ENCODE measurements at regions of chr13 and their contacts with region 1.

Region 1: DNA sequence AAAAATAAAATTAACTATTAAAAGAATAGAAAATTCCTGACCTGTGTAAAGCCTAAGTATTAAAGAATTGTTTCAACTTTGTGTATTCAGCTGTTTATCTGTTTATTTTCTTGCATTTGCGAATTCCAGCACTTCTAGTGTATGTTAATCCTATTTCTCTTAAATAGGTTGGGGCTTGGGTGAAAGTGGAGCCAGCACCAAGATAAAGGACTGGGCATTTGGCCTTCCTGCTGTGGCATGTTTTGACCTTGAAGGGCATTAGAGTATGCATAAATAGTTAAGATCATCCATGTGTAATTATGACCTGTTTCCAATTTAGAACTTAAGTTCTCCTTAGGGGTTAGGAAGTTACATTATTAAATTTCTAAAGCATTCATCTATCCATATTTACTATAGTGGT is 151.3 kb downstream of the NBEA start:
- DNase-seq: no peak
- ATAC-seq: no peak
- H3K4me3 ChIP-seq: no peak overlapping the region
- H3K4me3 Mint-ChIP-seq: no peak overlapping the region
- H3K27ac ChIP-seq: no peak overlapping the region
- H3K27ac Mint-ChIP-seq: no peak overlapping the region
- H3K4me1 ChIP-seq: no peaks in the 10 kb centered on the region
- H3K4me1 Mint-ChIP-seq: no peaks in the 10 kb centered on the region
- H3K27me3 ChIP-seq: no peaks in the 10 kb centered on the region
- H3K27me3 Mint-ChIP-seq: no peaks in the 10 kb centered on the region

Region 2: DNA sequence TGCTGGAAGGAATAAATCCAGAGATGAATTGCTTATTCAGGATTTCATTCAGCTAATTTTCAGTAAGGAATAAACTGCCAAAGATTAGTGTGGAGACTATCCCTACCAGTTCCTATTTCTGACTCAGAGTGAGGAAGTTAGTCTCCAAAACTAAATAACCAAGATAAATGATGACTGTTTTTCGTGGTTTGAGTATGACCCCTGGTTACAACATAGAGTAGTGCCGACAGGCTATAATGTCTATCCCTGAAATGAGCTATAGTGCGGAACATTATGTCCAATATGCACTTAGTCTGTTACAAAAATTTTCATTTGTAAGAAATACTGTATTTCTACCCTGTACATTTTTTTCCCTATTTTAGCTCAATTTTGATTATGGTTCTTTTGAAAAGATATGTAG is 99.9 kb before region 1 on chr13:
- CTCF ChIA-PET with region 1: no interaction called
- POLR2A ChIA-PET with region 1: no interaction called
- intact Hi-C with region 1: no loop called
- DNase-seq: no peak
- ATAC-seq: no peak
- H3K4me3 ChIP-seq: no peak overlapping the region
- H3K4me3 Mint-ChIP-seq: no peak overlapping the region
- H3K27ac ChIP-seq: no peak overlapping the region
- H3K27ac Mint-ChIP-seq: no peak overlapping the region
- H3K4me1 ChIP-seq: no peaks in the 10 kb centered on the region
- H3K4me1 Mint-ChIP-seq: peaks cover 0 to 4% (median 0%) of the 10 kb centered on the region in 7 donors
- H3K27me3 ChIP-seq: no peaks in the 10 kb centered on the region
- H3K27me3 Mint-ChIP-seq: no peaks in the 10 kb centered on the region

Region 3: GRCh38 chr13:35039012-35039411 is 54.3 kb before region 1 on chr13:
- CTCF ChIA-PET with region 1: no interaction called
- POLR2A ChIA-PET with region 1: no interaction called
- intact Hi-C with region 1: loop called in 1 of 2 experiments (anchors 10 kb)
- DNase-seq: no peak
- ATAC-seq: no peak
- H3K4me3 ChIP-seq: no peak overlapping the region
- H3K4me3 Mint-ChIP-seq: no peak overlapping the region
- H3K27ac ChIP-seq: no peak overlapping the region
- H3K27ac Mint-ChIP-seq: no peak overlapping the region
- H3K4me1 ChIP-seq: no peaks in the 10 kb centered on the region
- H3K4me1 Mint-ChIP-seq: peaks cover 0 to 1% (median 0%) of the 10 kb centered on the region in 7 donors
- H3K27me3 ChIP-seq: no peaks in the 10 kb centered on the region
- H3K27me3 Mint-ChIP-seq: no peaks in the 10 kb centered on the region

Region 4: GRCh38 chr13:35139591-35139990 is 46.2 kb after region 1 on chr13:
- CTCF ChIA-PET with region 1: no interaction called
- POLR2A ChIA-PET with region 1: no interaction called
- intact Hi-C with region 1: no loop called
- DNase-seq: no peak
- ATAC-seq: peak; percentile 50
- H3K4me3 ChIP-seq: no peak overlapping the region
- H3K4me3 Mint-ChIP-seq: peak overlapping the region in 1 of 10 donors; percentile 49
- H3K27ac ChIP-seq: no peak overlapping the region
- H3K27ac Mint-ChIP-seq: peak overlapping the region in 1 of 9 donors; percentile 68
- H3K4me1 ChIP-seq: no peaks in the 10 kb centered on the region
- H3K4me1 Mint-ChIP-seq: peaks cover 0 to 20% (median 2%) of the 10 kb centered on the region in 7 donors
- H3K27me3 ChIP-seq: no peaks in the 10 kb centered on the region
- H3K27me3 Mint-ChIP-seq: no peaks in the 10 kb centered on the region

Region 5: DNA sequence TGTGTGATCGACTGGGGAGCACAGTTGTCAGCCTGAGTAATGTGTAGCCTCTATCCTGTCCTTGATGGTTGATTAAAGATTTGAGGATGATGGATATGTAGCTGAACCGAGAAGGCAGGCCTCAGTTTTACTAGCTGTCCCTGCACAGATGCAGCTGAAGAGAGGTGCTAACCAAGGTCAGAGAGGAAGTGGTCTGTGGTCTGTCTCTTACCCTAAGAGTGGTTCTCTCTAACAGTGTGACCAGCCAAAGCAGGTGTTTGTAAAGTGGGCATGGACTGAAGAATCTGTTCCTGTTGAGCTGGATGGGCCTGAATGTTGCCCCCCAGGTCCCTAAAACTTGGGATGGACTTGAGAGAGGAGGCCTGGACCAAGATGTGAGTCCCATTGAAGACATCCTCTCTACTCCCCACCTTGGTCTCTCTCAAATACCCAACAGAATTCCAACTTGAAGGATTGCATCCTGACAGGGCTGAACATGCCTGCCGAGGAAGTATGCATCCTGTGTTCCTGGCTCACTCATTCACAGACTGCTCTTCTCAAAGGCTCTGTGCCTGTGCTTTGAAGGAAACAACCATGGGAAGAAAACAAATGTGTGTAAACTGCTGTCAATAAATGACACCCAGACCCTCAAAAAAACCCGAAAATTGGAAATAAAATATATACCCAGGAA is 159.3 kb after region 1 on chr13:
- CTCF ChIA-PET with region 1: no interaction called
- POLR2A ChIA-PET with region 1: no interaction called
- intact Hi-C with region 1: no loop called
- DNase-seq: no peak
- ATAC-seq: no peak
- H3K4me3 ChIP-seq: no peak overlapping the region
- H3K4me3 Mint-ChIP-seq: no peak overlapping the region
- H3K27ac ChIP-seq: no peak overlapping the region
- H3K27ac Mint-ChIP-seq: no peak overlapping the region
- H3K4me1 ChIP-seq: no peaks in the 10 kb centered on the region
- H3K4me1 Mint-ChIP-seq: peaks cover 0 to 7% (median 0%) of the 10 kb centered on the region in 7 donors
- H3K27me3 ChIP-seq: no peaks in the 10 kb centered on the region
- H3K27me3 Mint-ChIP-seq: no peaks in the 10 kb centered on the region

Region 6: GRCh38 chr13:36057029-36057428 is 963.7 kb after region 1 on chr13:
- CTCF ChIA-PET with region 1: no interaction called
- POLR2A ChIA-PET with region 1: no interaction called
- intact Hi-C with region 1: no loop called
- DNase-seq: no peak
- ATAC-seq: no peak
- H3K4me3 ChIP-seq: no peak overlapping the region
- H3K4me3 Mint-ChIP-seq: no peak overlapping the region
- H3K27ac ChIP-seq: no peak overlapping the region
- H3K27ac Mint-ChIP-seq: no peak overlapping the region
- H3K4me1 ChIP-seq: no peaks in the 10 kb centered on the region
- H3K4me1 Mint-ChIP-seq: no peaks in the 10 kb centered on the region
- H3K27me3 ChIP-seq: no peaks in the 10 kb centered on the region
- H3K27me3 Mint-ChIP-seq: peaks cover 0 to 6% (median 0%) of the 10 kb centered on the region in 5 donors